AG04449 (cell line): ENCODE measurements at regions of chr12 and their contacts with region 1.

Region 1: DNA sequence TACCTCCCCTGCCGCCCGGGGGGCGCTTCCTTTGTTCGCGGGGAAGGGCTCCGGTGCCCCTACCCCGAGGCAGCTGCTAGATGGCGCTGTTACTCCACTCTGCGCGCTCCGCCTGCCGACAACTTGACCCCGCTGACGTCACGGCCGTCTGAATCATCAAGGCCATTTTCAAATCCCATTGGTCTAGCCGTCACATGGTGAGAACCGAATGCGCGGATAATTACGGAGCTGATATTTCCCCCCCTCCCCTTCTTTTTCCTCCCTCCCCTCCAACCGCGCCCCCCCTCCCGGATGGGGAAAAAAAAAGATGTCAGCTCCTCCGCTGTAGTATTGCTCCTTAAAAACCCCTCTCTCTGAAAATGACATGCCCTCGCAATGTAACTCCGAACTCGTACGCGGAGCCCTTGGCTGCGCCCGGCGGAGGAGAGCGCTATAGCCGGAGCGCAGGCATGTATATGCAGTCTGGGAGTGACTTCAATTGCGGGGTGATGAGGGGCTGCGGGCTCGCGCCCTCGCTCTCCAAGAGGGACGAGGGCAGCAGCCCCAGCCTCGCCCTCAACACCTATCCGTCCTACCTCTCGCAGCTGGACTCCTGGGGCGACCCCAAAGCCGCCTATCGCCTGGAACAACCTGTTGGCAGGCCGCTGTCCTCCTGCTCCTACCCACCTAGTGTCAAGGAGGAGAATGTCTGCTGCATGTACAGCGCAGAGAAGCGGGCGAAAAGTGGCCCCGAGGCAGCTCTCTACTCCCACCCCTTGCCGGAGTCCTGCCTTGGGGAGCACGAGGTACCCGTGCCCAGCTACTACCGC is at the start of gene HOXC10:
- DNase-seq: peak; percentile 89
- H3K4me3 ChIP-seq: peak within 1 kb of the TSS; percentile 96
- CTCF ChIP-seq: peak; percentile 92

Region 2: GRCh38 chr12:53770281-53770680 is 214.8 kb before region 1 on chr12:
- CTCF ChIA-PET with region 1: interaction called, 13 read pairs
- POLR2A ChIA-PET with region 1: interaction called, 4 read pairs
- DNase-seq: peak; percentile 90
- H3K4me3 ChIP-seq: no peak overlapping the region
- CTCF ChIP-seq: no peak

Region 3: GRCh38 chr12:54005853-54006686 is 21.0 kb after region 1 on chr12:
- CTCF ChIA-PET with region 1: interaction called, 249 read pairs
- POLR2A ChIA-PET with region 1: interaction called, 7 read pairs
- DNase-seq: no peak
- H3K4me3 ChIP-seq: peak overlapping the region; percentile 96
- CTCF ChIP-seq: peak; percentile 90

Region 4: DNA sequence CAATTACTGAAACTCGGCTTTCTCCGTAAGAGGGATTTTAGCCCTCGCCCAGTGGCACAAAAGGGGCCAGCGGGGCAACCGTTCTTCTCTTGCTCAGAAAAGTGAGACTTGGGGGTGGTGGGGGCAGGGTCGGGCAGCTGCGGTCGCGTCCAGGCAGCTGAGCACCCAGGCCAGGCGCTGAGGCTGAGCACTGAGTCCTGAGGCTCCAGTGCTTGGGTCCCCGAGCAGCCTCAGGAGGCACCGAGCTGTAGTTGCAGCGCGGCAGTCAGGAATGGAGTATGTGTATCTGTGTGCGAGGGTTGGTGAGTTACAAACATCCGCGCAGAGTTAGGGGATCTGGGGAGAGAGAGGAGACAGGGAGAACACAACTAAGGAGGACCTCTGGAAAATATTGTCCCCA is 39.0 kb after region 1 on chr12:
- CTCF ChIA-PET with region 1: interaction called, 16 read pairs
- POLR2A ChIA-PET with region 1: interaction called, 5 read pairs
- DNase-seq: no peak
- H3K4me3 ChIP-seq: peak overlapping the region; percentile 55
- CTCF ChIP-seq: no peak

Region 5: DNA sequence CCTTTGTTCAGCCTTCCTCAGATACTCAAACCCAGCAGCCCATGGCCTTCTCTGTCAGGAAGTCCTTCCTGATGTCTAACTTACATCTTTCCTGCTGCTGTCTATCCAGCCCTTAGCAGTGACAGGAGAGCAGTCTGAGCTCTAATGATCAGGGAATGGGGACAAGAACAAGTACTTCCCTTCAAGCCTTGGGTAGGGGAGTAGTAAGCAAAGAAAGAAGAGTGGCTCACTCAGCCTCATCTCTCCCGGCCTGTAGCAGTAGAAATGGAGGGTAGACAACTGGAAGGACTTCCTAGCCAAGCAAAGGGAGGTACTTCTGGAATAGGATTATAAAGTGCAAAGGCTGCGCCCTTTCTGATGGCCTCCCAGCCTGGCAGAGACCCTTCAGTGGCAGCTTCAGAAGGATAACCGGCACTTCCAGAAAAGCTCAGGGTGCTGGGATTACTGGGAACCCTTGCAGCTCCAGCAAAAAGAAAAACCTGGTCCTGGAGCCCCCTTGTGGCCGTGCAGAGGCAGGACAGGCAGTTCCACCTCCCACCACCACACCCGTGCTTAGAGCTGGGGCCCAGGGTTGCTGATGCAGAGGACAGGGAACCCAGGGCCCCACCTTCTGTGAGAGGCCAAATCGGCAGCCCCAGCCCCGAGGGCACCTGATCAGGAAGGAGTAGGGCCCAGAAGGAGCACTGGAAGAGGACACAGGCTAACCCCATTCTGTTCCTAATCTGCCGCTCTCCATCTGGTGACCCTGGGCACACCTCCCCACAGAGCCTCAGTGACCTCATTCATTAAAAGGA is 216.1 kb after region 1 on chr12:
- CTCF ChIA-PET with region 1: interaction called, 401 read pairs
- POLR2A ChIA-PET with region 1: interaction called, 6 read pairs
- DNase-seq: no peak
- H3K4me3 ChIP-seq: no peak overlapping the region
- CTCF ChIP-seq: peak; percentile 98